ENCODE measurements at regions of chr5 and their contacts with region 1.

Region 1: DNA sequence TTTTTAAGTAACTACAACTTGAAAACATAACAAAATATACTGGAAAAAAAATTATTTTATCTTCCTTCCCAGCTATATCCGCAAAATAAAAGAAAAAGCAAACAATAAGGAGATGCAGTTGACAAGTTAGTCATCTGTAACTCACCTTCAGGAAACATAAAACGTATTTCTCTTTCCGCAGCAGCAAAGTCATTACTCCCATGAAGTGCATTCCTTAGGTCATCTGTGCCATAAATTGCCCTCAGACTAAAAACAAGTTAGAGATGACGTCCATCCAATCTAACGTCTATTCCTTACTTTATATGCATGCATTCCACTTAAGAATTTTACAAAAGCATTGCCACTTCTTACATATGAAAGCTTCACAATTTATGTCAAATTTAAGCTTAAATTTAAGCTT is 10.9 kb downstream of the NME5 start:
- DNase-seq: no peak
- ATAC-seq: no peak
- H3K4me3 ChIP-seq: no peak overlapping the region
- H3K4me3 Mint-ChIP-seq: no peak overlapping the region
- H3K27ac ChIP-seq: no peak overlapping the region
- H3K27ac Mint-ChIP-seq: no peak overlapping the region
- H3K4me1 ChIP-seq: peaks cover 4% of the 10 kb centered on the region
- H3K4me1 Mint-ChIP-seq: no peaks in the 10 kb centered on the region
- H3K27me3 ChIP-seq: no peaks in the 10 kb centered on the region
- H3K27me3 Mint-ChIP-seq: peaks cover 1 to 5% of the 10 kb centered on the region in 2 donors
- CTCF ChIP-seq: no peak

Region 2: DNA sequence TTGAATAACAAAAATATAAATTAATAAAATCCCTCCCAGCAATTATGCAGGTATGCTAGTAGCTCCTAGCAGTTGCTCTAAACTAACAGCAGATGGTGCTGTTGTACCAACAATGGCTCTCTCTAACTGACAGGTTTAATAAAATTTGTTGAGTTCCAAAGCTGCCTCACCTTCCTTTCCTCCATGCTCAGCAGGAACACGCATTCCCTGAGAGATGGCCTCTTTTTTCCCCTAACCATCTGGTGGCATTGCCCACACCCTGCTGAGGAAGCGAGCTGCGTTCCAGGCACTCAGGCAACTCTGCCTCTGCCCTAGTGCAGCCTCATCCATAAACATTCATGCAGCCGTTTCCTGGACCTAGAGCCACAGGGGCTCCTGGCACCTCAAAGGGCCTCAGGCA is 498.7 kb before region 1 on chr5:
- intact Hi-C with region 1: loop called (anchors 1 kb)
- DNase-seq: peak in 1 of 2 donors; percentile 75
- ATAC-seq: peak; percentile 77 to 87 (median 79)
- H3K4me3 ChIP-seq: no peak overlapping the region
- H3K4me3 Mint-ChIP-seq: no peak overlapping the region
- H3K27ac ChIP-seq: no peak overlapping the region
- H3K27ac Mint-ChIP-seq: no peak overlapping the region
- H3K4me1 ChIP-seq: no peaks in the 10 kb centered on the region
- H3K4me1 Mint-ChIP-seq: no peaks in the 10 kb centered on the region
- H3K27me3 ChIP-seq: no peaks in the 10 kb centered on the region
- H3K27me3 Mint-ChIP-seq: no peaks in the 10 kb centered on the region
- CTCF ChIP-seq: peak; percentile 94

Region 3: GRCh38 chr5:137660349-137660817 is 468.0 kb before region 1 on chr5:
- intact Hi-C with region 1: loop called (anchors 1 kb)
- DNase-seq: peak; percentile 50 to 86
- ATAC-seq: peak; percentile 72 to 87 (median 87)
- H3K4me3 ChIP-seq: no peak overlapping the region
- H3K4me3 Mint-ChIP-seq: no peak overlapping the region
- H3K27ac ChIP-seq: no peak overlapping the region
- H3K27ac Mint-ChIP-seq: no peak overlapping the region
- H3K4me1 ChIP-seq: no peaks in the 10 kb centered on the region
- H3K4me1 Mint-ChIP-seq: no peaks in the 10 kb centered on the region
- H3K27me3 ChIP-seq: no peaks in the 10 kb centered on the region
- H3K27me3 Mint-ChIP-seq: no peaks in the 10 kb centered on the region
- CTCF ChIP-seq: peak; percentile 63

Region 4: GRCh38 chr5:137778772-137779564 is 349.4 kb before region 1 on chr5:
- intact Hi-C with region 1: loop called (anchors 1 kb)
- DNase-seq: peak in 1 of 2 donors; percentile 60
- ATAC-seq: no peak
- H3K4me3 ChIP-seq: no peak overlapping the region
- H3K4me3 Mint-ChIP-seq: no peak overlapping the region
- H3K27ac ChIP-seq: no peak overlapping the region
- H3K27ac Mint-ChIP-seq: no peak overlapping the region
- H3K4me1 ChIP-seq: no peaks in the 10 kb centered on the region
- H3K4me1 Mint-ChIP-seq: no peaks in the 10 kb centered on the region
- H3K27me3 ChIP-seq: no peaks in the 10 kb centered on the region
- H3K27me3 Mint-ChIP-seq: no peaks in the 10 kb centered on the region
- CTCF ChIP-seq: peak; percentile 76

Region 5: DNA sequence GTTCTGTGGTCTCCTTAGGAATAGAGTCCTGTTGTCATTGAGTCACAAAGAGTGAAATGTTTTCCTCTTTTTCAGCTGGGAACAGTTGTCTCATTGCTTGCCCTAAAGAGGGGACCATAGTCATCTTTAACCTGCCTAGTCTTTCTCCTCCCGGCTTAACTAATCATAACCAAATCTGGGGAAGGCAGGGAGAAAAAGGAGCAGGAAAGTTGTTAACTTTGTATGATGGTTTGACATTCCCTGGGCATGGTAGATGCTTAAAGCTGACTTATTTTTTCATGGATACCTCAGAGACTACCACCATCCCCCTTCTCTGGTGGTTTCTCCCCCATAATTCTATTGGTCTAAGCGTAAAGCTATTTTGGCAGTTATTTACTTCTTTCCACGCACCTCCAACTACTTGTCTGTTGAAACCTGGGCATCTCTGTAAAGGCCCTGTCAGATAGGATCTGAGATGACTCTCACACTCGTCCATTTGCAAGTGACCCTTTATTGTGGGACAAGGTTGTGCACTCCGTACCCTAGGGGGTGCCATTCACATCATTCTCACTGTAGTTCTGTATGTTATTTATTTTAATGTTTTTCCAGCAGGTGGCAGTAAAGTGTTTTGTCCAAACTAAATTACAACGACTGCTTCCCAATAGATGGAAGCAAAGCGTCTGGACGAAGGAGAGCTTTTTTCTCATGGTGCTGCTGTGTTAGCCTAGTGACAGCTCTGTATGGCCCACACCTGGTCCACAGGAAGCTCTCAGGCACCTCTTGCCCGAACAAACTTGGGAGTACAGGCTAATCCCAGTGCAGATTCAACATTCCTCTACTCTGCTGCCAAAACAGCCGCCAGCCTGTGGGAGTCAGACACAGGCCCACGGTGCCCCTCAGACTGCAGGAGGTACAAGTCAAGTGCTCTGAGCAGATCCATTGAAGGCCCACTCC is 92.5 kb before region 1 on chr5:
- intact Hi-C with region 1: loop called (anchors 1 kb)
- DNase-seq: peak; percentile 33 to 89
- ATAC-seq: peak; percentile 60 to 77 (median 62)
- H3K4me3 ChIP-seq: no peak overlapping the region
- H3K4me3 Mint-ChIP-seq: peak overlapping the region; percentile 74
- H3K27ac ChIP-seq: no peak overlapping the region
- H3K27ac Mint-ChIP-seq: peak overlapping the region; percentile 50 to 58
- H3K4me1 ChIP-seq: peaks cover 18% of the 10 kb centered on the region
- H3K4me1 Mint-ChIP-seq: peaks cover 31 to 32% of the 10 kb centered on the region in 2 donors
- H3K27me3 ChIP-seq: no peaks in the 10 kb centered on the region
- H3K27me3 Mint-ChIP-seq: no peaks in the 10 kb centered on the region
- CTCF ChIP-seq: peak; percentile 92

Region 6: DNA sequence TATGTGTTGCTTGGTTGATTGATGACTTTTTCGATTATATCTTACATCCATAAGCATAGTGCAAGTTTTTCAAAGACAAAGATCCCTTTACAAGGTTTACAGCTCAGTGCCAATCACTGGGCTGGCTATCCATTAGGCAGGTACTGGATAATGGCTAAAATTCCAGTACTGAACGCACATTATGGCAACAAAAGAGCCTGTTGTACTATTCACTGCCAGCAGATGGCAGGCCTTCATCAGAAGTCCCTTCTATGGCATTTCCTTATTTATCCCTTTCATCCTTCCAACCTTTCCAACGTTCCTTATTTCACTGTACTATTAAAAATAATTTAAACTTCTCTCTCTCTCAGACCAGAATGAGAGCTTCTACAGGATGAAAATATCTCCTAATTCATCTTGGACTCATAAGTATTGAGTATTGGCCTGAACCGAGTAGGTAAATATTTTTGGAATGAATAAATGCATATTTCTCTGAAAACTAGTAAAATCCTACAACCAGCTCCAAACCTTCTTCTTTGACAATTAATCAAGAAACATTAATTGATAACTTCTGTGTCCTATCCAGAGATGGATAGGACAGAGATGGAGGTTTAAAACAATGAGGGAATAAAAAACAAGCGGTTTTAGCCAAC is 51.2 kb before region 1 on chr5:
- intact Hi-C with region 1: loop called (anchors 1 kb)
- DNase-seq: peak in 1 of 2 donors; percentile 77
- ATAC-seq: peak in 2 of 3 donors; percentile 63 to 69
- H3K4me3 ChIP-seq: no peak overlapping the region
- H3K4me3 Mint-ChIP-seq: no peak overlapping the region
- H3K27ac ChIP-seq: no peak overlapping the region
- H3K27ac Mint-ChIP-seq: no peak overlapping the region
- H3K4me1 ChIP-seq: no peaks in the 10 kb centered on the region
- H3K4me1 Mint-ChIP-seq: no peaks in the 10 kb centered on the region
- H3K27me3 ChIP-seq: no peaks in the 10 kb centered on the region
- H3K27me3 Mint-ChIP-seq: peaks cover 0 to 10% of the 10 kb centered on the region in 2 donors
- CTCF ChIP-seq: peak; percentile 81

Measured in natural killer cell (primary cell).